ENCODE measurements at regions of chr21 and their contacts with region 1.

Region 1: GRCh38 chr21:17763288-17764037 is 55.7 kb downstream of the C21orf91 start:
- DNase-seq: peak; percentile 54
- H3K4me3 Mint-ChIP-seq: no peak overlapping the region
- H3K27ac Mint-ChIP-seq: peak overlapping the region; percentile 64
- H3K4me1 Mint-ChIP-seq: peaks cover 22% of the 10 kb centered on the region
- H3K27me3 Mint-ChIP-seq: no peaks in the 10 kb centered on the region
- CTCF ChIP-seq: no peak

Region 2: GRCh38 chr21:17708522-17709265 is 54.8 kb before region 1 on chr21:
- CTCF ChIA-PET with region 1: no interaction called
- POLR2A ChIA-PET with region 1: interaction called, 15 read pairs
- intact Hi-C with region 1: no loop called
- DNase-seq: no peak
- H3K4me3 Mint-ChIP-seq: no peak overlapping the region
- H3K27ac Mint-ChIP-seq: peak overlapping the region; percentile 99
- H3K4me1 Mint-ChIP-seq: peaks cover 35% of the 10 kb centered on the region
- H3K27me3 Mint-ChIP-seq: no peaks in the 10 kb centered on the region
- CTCF ChIP-seq: no peak

Measured in MCF 10A (cell line).